ENCODE measurements at regions of chr7 and their contacts with region 1.

Region 1: GRCh38 chr7:158394936-158395335 is 192.7 kb downstream of the PTPRN2 start:
- DNase-seq: no peak
- H3K4me3 ChIP-seq: no peak overlapping the region
- CTCF ChIP-seq: no peak
- POLR2A ChIP-seq: no peak

Region 2: DNA sequence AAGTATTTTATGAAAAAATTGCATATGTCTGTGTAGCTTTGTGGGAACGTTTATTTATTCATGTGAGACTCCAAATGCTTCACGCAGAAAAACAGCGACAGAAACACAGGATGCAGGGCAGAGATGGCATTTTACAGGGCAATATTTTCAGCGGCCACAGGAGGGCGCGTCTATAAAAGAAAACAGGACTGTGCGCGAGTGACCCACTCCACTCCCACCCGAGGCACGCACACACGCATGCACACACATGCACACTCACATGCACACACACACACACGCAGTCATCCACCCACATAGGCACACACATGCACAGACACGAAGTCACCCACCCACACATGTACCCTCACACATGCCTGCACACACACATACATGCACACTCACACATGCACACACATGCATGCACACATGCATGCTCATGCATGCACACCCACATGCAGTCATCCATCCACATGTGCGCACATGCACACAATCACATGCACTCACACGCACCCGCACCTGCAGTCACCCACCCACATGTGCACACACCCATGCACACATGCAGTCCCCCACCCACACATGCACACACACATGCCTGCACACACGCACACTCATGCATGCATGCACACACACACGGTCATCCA is 961.9 kb before region 1 on chr7:
- intact Hi-C with region 1: loop called (anchors 10 kb)
- DNase-seq: peak; percentile 27 to 58
- H3K4me3 ChIP-seq: no peak overlapping the region
- CTCF ChIP-seq: peak in 1 of 3 donors; percentile 13
- POLR2A ChIP-seq: no peak

Region 3: GRCh38 chr7:158120716-158121115 is 274.2 kb before region 1 on chr7:
- intact Hi-C with region 1: no loop called
- DNase-seq: peak in 1 of 2 donors; percentile 46
- H3K4me3 ChIP-seq: no peak overlapping the region
- CTCF ChIP-seq: no peak
- POLR2A ChIP-seq: no peak

Measured in lower leg skin (tissue), 4 donors.